Activated CD8-positive, alpha-beta memory T cell treated with anti-CD3 and anti-CD28 coated beads, Interleukin-2, amount 10 ng/mL, durations not matched to agents 7 days and 5 days (primary cell): ENCODE measurements at regions of chr14 and their contacts with region 1.

Region 1: DNA sequence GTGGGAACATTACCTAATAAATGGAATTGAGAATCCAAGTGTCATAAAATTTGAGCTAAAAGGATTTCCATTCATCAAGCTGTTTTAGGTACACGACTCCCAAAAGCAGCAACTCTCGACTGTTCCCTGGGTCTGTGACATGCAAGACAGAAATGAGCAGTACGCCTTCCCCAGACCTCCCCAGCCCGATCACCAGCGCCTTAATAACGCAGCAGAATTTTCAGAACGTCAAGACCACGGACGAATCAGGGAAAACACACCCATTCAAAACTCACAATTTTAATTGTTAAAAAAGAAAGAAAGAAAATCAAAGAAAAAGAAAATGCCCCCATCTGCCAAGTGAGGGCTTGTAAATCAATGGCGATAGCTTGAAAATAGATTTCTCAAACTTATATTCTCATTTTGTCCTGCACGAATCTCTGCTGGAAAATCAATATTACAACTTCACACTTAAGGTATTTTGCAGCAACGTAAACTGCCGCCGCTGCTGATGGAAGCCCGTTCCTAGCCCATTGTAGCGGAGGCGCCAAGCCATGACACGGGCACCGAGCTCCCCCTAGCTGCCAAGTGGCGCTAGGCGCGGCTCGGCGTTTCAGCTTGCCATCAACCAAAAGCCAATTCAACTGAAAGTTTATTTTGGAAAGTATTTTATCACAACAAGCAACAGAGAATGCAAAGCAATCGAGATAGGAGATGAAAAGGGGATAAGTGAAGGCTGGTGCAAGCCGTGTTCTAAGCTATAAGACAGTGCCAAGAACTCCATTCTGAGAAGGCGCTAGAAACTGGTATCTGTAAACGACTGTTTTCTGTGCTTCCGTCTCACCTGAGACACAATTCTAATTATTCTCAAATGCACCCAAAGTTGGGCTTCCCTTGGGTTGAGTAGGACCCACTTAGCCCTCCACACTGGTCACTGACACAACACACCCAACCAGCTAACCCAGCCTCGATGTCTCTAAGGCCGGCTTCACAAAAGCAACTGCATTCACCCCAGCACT is 5.5 kb downstream of the BCL11B start:
- DNase-seq: peak; percentile 93
- ATAC-seq: peak; percentile 46
- H3K4me3 Mint-ChIP-seq: peak overlapping the region; percentile 96
- H3K27ac Mint-ChIP-seq: peak overlapping the region; percentile 98
- H3K4me1 Mint-ChIP-seq: peaks cover 58% of the 10 kb centered on the region
- H3K27me3 Mint-ChIP-seq: peaks cover 2% of the 10 kb centered on the region

Region 2: DNA sequence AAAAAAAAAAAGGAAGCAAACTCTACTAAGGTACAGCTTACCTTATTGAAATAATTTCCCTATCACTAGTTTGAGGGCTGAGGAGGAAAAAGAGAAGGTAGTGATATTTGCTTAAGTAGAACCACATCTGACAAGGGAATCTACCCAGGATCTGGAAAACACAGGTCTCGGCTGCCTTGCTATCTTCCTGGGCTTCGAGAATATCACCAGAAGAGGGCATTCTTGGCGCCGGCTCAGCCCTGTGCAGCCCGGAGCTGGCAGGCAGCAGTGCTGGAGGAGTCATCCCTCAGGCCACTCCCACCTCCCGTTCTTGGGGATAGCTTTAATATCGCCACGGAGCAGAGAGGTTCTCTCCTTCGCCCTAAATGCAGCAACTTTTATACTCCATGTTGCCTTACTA is 1288.1 kb before region 1 on chr14:
- CTCF ChIA-PET with region 1: interaction called, 22 read pairs
- DNase-seq: peak; percentile 88
- ATAC-seq: peak; percentile 89
- H3K4me3 Mint-ChIP-seq: peak overlapping the region; percentile 84
- H3K27ac Mint-ChIP-seq: peak overlapping the region; percentile 95
- H3K4me1 Mint-ChIP-seq: peaks cover 48% of the 10 kb centered on the region
- H3K27me3 Mint-ChIP-seq: no peaks in the 10 kb centered on the region

Region 3: DNA sequence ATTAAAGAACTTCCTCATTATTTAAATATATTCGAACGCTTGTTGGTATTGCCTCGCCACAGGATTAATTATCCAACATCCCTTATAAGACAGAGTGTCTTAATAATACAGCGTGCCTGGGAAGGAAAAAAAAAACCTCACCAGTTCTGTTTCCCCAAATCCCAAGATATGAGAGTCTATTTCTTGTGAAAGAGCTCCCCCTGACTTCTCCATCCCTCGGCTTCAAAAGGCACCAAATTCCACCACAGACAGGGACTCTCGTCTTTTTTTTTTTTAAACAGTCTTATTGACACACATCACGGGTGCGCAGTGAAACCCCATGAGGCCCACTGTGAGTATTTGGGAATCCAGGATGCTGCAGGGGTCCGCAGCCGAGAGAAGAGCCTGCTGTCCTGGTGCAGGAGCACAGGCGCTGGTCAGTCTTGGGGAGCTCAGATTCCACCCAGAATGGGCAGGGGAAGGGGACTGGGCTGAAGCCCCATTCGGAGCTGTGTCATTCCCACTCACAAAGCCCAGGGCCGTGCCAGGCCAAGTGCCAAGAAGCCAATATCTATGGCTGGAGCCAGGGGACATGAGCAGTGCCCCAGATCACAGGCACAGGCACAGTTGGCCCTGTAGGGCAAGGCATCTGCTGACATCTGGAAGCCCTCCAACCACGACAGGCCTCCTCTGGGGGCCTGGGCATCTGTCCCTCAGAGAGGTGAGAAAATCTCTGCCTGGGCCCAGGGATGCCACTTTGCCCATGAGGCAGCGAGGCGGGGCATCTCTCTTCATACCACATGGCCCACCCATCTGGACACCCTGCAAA is 66.4 kb before region 1 on chr14:
- CTCF ChIA-PET with region 1: interaction called, 17 read pairs
- DNase-seq: no peak
- ATAC-seq: no peak
- H3K4me3 Mint-ChIP-seq: no peak overlapping the region
- H3K27ac Mint-ChIP-seq: peak overlapping the region; percentile 62
- H3K4me1 Mint-ChIP-seq: peaks cover 90% of the 10 kb centered on the region
- H3K27me3 Mint-ChIP-seq: no peaks in the 10 kb centered on the region

Region 4: GRCh38 chr14:99224116-99224910 is 42.2 kb before region 1 on chr14:
- CTCF ChIA-PET with region 1: interaction called, 395 read pairs
- DNase-seq: no peak
- ATAC-seq: no peak
- H3K4me3 Mint-ChIP-seq: no peak overlapping the region
- H3K27ac Mint-ChIP-seq: peak overlapping the region; percentile 91
- H3K4me1 Mint-ChIP-seq: peaks cover 90% of the 10 kb centered on the region
- H3K27me3 Mint-ChIP-seq: no peaks in the 10 kb centered on the region

Region 5: GRCh38 chr14:99252940-99253868 is 13.3 kb before region 1 on chr14:
- CTCF ChIA-PET with region 1: interaction called, 12 read pairs
- DNase-seq: peak; percentile 78
- ATAC-seq: peak; percentile 33
- H3K4me3 Mint-ChIP-seq: peak overlapping the region; percentile 67
- H3K27ac Mint-ChIP-seq: peak overlapping the region; percentile 96
- H3K4me1 Mint-ChIP-seq: peaks cover 95% of the 10 kb centered on the region
- H3K27me3 Mint-ChIP-seq: no peaks in the 10 kb centered on the region